Calu3 (cell line): ENCODE measurements at regions of chr6 and their contacts with region 1.

Region 1: DNA sequence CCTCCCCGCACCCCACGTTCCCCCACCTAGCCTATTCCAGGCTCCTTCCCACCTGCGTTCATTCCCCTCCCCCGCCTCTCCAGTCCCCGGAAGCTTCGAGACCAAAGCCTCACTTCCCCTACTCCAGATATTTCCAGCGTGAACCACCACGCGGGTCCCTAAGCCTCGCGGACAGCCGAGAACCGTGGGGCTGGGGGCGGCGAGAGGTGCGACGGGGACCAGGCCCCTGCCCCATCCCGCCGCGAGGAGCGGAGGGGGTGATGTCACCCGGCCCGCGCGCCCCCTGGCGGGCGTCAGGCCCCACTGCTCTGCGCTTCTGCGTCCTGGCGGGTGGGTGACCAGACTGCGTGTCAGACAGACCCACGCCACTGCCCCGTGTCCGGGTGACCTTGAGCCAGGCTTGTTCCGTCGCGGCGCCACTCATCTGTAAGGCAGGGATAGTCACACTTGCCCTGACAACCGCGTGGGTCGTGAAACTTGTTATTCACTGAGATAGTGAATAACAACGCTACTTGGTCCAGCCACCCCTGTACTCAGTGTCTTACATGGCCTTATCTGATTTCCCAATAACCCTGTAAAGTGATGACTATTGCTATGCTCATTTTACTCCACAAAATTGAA is 9.0 kb upstream of the HSP90AB1 start:
- DNase-seq: peak; percentile 95
- H3K4me3 Mint-ChIP-seq: peak overlapping the region; percentile 83
- H3K27ac Mint-ChIP-seq: peak overlapping the region; percentile 91
- H3K4me1 Mint-ChIP-seq: peaks cover 41% of the 10 kb centered on the region
- H3K27me3 Mint-ChIP-seq: no peaks in the 10 kb centered on the region
- CTCF ChIP-seq: peak; percentile 99

Region 2: GRCh38 chr6:44172731-44173500 is 65.0 kb before region 1 on chr6:
- CTCF ChIA-PET with region 1: interaction called, 12 read pairs
- intact Hi-C with region 1: loop called (anchors 1 kb)
- DNase-seq: peak; percentile 90
- H3K4me3 Mint-ChIP-seq: no peak overlapping the region
- H3K27ac Mint-ChIP-seq: no peak overlapping the region
- H3K4me1 Mint-ChIP-seq: peaks cover 11% of the 10 kb centered on the region
- H3K27me3 Mint-ChIP-seq: peaks cover 50% of the 10 kb centered on the region
- CTCF ChIP-seq: peak; percentile 95